ENCODE measurements at regions of chr6 and their contacts with region 1.

Region 1: DNA sequence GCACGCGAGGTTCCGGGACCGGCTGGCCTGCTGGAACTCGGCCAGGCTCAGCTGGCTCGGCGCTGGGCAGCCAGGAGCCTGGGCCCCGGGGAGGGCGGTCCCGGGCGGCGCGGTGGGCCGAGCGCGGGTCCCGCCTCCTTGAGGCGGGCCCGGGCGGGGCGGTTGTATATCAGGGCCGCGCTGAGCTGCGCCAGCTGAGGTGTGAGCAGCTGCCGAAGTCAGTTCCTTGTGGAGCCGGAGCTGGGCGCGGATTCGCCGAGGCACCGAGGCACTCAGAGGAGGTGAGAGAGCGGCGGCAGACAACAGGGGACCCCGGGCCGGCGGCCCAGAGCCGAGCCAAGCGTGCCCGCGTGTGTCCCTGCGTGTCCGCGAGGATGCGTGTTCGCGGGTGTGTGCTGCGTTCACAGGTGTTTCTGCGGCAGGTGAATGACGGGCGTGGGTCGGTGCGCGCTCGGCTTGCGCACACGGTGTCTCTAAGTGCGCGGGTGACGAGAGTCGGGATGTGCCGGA is at the start of gene CDKN1A:
- DNase-seq: peak; percentile 72 to 86
- ATAC-seq: peak; percentile 50 to 67 (median 58)
- H3K4me3 ChIP-seq: peak within 1 kb of the TSS; percentile 63
- H3K4me3 Mint-ChIP-seq: peak within 1 kb of the TSS; percentile 97
- H3K27ac ChIP-seq: peak within 1 kb of the TSS; percentile 59
- H3K27ac Mint-ChIP-seq: peak within 1 kb of the TSS; percentile 87 to 96
- H3K4me1 ChIP-seq: peaks cover 45% of the 10 kb centered on the region
- H3K4me1 Mint-ChIP-seq: peaks cover 29 to 30% of the 10 kb centered on the region in 2 donors
- H3K27me3 ChIP-seq: peaks cover 5% of the 10 kb centered on the region
- H3K27me3 Mint-ChIP-seq: peaks cover 0 to 5% of the 10 kb centered on the region in 2 donors
- CTCF ChIP-seq: no peak
- total RNA-seq, gene CDKN1A: 19.1 to 40.7 (median 25.4) TPM

Region 2: DNA sequence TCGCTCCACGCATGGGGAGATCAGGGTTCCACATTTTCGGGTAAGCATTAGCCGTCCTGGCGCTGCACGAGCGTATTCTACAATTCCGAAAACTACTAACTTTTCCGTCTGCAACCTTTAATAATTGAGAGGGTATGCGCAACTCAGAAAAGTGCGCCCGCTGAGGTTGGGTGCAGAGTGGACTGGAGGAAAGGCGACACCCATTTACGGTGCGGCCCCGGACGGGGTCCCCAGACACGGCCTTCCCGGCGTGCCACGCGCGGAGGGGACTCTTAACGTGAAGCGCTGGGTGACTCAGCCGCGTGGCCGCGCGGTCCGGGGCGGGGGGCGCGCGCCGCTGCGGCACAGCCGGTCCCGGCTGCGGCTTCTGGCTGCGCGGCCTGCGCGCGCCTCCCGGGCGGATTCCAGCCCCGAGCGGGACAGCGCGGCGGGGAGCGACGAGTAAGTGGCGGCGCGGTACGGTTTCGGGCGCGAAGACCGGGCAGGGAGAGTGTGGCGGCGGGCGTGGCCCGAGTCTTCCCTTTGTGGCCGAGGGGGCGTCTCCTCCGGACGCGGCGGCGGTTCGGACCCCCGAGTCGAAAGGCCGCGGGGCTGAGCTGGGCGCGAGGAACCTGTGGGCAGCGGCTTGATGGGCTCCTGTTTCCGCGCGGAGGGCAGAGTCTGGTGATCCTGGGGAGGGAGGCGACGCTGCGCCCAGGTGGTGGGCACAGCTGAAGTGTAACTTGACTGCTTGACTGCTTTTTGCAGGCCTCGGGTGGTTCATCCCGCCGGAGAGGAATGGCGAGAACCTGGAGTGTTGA is 235.7 kb before region 1 on chr6 and contains the starts of genes KCTD20 and PXT1:
- intact Hi-C with region 1: loop called (anchors 2 kb)
- DNase-seq: peak; percentile 87 to 92
- ATAC-seq: peak; percentile 80 to 94 (median 88)
- H3K4me3 ChIP-seq: peak within 1 kb of the TSS; percentile 91
- H3K4me3 Mint-ChIP-seq: peak within 1 kb of the TSS; percentile 97
- H3K27ac ChIP-seq: peak within 1 kb of the TSS; percentile 89
- H3K27ac Mint-ChIP-seq: peak within 1 kb of the TSS; percentile 94 to 95
- H3K4me1 ChIP-seq: peaks cover 25% of the 10 kb centered on the region
- H3K4me1 Mint-ChIP-seq: peaks cover 37 to 45% of the 10 kb centered on the region in 2 donors
- H3K27me3 ChIP-seq: no peaks in the 10 kb centered on the region
- H3K27me3 Mint-ChIP-seq: no peaks in the 10 kb centered on the region
- CTCF ChIP-seq: no peak
- total RNA-seq, gene KCTD20: 37.7 to 43.5 (median 43.2) TPM
- total RNA-seq, gene PXT1: 0.27 to 1.0 (median 0.28) TPM

Region 3: GRCh38 chr6:36539814-36540568 is 138.6 kb before region 1 on chr6:
- intact Hi-C with region 1: loop called (anchors 10 kb)
- DNase-seq: peak in 1 of 2 donors; percentile 66
- ATAC-seq: peak; percentile 66 to 80 (median 71)
- H3K4me3 ChIP-seq: no peak overlapping the region
- H3K4me3 Mint-ChIP-seq: peak overlapping the region; percentile 35
- H3K27ac ChIP-seq: peak overlapping the region; percentile 86
- H3K27ac Mint-ChIP-seq: peak overlapping the region; percentile 75 to 86
- H3K4me1 ChIP-seq: peaks cover 61% of the 10 kb centered on the region
- H3K4me1 Mint-ChIP-seq: peaks cover 53 to 67% of the 10 kb centered on the region in 2 donors
- H3K27me3 ChIP-seq: no peaks in the 10 kb centered on the region
- H3K27me3 Mint-ChIP-seq: no peaks in the 10 kb centered on the region
- CTCF ChIP-seq: no peak

Region 4: DNA sequence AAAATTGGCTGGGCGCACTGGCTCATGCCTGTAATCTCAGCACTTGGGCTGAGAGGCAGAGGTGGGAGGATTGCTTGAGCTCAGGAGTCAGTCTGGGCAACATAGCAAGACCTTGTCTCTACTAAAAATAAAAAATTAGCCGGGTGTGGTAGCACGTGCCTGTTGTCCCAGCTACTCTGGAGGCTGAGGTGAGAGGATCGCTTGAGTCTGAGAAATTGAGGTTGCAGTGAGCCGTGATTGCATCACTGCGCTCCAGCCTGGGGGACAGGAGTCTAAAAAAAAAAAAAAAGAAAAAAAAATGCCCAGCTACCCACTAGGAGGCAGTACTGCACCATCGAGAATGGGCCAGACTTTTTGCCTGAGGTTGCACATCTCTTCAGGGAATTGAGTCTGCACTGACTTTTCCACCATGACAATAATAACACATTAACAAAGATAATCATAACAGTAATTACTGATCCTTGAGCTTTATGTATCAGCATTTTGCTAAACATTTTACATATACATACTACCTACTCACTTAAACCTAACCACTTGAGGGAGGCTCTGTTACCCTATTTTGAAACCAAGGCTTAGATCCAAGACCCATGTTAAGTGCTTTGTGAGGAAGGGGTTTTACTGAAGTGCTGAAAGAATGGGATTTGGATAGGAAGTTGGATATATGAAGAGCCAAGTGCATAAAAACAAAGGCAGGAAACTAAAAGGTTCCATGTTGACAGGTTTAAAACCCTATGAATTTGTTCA is 63.4 kb before region 1 on chr6:
- intact Hi-C with region 1: loop called (anchors 2 kb)
- DNase-seq: peak; percentile 34 to 80
- ATAC-seq: peak; percentile 76 to 92 (median 85)
- H3K4me3 ChIP-seq: no peak overlapping the region
- H3K4me3 Mint-ChIP-seq: no peak overlapping the region
- H3K27ac ChIP-seq: peak overlapping the region; percentile 53
- H3K27ac Mint-ChIP-seq: peak overlapping the region; percentile 74 to 88
- H3K4me1 ChIP-seq: peaks cover 14% of the 10 kb centered on the region
- H3K4me1 Mint-ChIP-seq: peaks cover 15 to 22% of the 10 kb centered on the region in 2 donors
- H3K27me3 ChIP-seq: no peaks in the 10 kb centered on the region
- H3K27me3 Mint-ChIP-seq: no peaks in the 10 kb centered on the region
- CTCF ChIP-seq: peak; percentile 75

Region 5: DNA sequence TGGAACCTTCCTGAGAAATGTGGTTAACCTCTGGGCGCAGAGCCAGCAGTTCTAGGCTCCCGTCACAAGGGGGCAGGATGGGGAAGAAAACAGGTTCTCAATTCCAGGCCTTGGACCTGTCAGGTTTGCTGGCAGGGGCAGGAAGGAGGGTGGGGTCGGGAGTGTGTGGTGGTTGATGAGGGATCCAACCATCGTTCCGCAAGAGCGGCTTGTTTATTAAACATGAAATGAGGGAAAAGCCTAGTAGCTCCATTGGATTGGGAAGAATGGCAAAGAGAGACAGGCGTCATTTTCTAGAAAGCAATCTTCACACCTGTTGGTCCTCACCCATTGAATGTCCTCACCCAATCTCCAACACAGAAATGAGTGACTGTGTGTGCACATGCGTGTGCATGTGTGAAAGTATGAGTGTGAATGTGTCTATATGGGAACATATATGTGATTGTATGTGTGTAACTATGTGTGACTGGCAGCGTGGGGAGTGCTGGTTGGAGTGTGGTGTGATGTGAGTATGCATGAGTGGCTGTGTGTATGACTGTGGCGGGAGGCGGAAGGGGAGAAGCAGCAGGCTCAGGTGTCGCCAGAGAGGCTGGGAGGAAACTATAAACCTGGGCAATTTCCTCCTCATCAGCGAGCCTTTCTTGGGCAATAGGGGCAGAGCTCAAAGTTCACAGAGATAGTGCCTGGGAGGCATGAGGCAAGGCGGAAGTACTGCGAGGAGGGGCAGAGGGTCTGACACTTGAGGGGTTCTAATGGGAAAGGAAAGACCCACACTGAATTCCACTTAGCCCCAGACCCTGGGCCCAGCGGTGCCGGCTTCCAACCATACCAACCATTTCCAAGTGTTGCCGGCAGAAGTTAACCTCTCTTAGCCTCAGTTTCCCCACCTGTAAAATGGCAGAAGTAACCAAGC is 54.8 kb before region 1 on chr6:
- intact Hi-C with region 1: loop called (anchors 2 kb)
- DNase-seq: peak; percentile 67 to 88
- ATAC-seq: peak; percentile 78 to 94 (median 94)
- H3K4me3 ChIP-seq: no peak overlapping the region
- H3K4me3 Mint-ChIP-seq: no peak overlapping the region
- H3K27ac ChIP-seq: no peak overlapping the region
- H3K27ac Mint-ChIP-seq: peak overlapping the region in 1 of 2 donors; percentile 35
- H3K4me1 ChIP-seq: peaks cover 11% of the 10 kb centered on the region
- H3K4me1 Mint-ChIP-seq: peaks cover 0 to 14% of the 10 kb centered on the region in 2 donors
- H3K27me3 ChIP-seq: no peaks in the 10 kb centered on the region
- H3K27me3 Mint-ChIP-seq: peaks cover 0 to 2% of the 10 kb centered on the region in 2 donors
- CTCF ChIP-seq: peak; percentile 86

Measured in natural killer cell (primary cell).